GM12878 (cell line): ENCODE measurements at regions of chr1 and their contacts with region 1.

Region 1: GRCh38 chr1:35557292-35558063 is at the starts of genes KIAA0319L and NCDN:
- DNase-seq: peak; percentile 85
- ATAC-seq: peak; percentile 94
- H3K4me3 ChIP-seq: peak within 1 kb of the TSS; percentile 67
- H3K27ac ChIP-seq: peak within 1 kb of the TSS; percentile 97
- H3K4me1 ChIP-seq: peaks cover 10% of the 10 kb centered on the region
- H3K27me3 ChIP-seq: no peaks in the 10 kb centered on the region
- CTCF ChIP-seq: no peak
- EP300 ChIP-seq: no peak
- POLR2A ChIP-seq: peak; percentile 93
- RAD21 ChIP-seq: no peak
- polyA plus RNA-seq, gene KIAA0319L: 2.6 to 5.9 TPM
- polyA plus RNA-seq, gene NCDN: 1.8 to 2.0 TPM

Region 2: DNA sequence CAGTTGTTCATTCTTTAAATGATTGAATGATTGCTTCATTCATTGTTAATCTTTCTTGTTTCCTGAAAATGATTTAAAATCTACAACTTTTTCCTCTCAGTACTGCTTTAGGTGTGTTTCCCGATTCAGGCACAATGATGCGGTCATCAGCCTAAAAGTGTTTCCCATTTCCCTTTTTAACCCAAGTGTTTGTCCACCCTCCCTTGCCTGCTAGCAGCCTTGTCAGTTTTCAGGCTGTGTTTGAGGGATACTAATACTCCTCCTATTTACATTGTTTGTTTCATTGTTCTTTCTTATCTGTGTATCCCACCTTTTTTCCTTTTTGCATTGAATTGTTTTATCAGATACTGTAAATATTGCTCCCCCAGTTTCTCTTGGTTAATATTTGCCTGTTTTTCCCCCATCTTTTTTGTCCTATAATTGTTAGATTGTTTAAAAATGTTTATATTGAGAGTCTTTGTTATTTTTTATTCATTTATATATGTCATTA is 131.3 kb before region 1 on chr1:
- CTCF ChIA-PET with region 1: no interaction called
- POLR2A ChIA-PET with region 1: no interaction called
- RAD21 ChIA-PET with region 1: no interaction called
- SMC1A ChIA-PET with region 1: no interaction called
- in situ Hi-C with region 1: no loop called
- intact Hi-C with region 1: no loop called
- DNase-seq: no peak
- ATAC-seq: no peak
- H3K4me3 ChIP-seq: no peak overlapping the region
- H3K27ac ChIP-seq: no peak overlapping the region
- H3K4me1 ChIP-seq: no peaks in the 10 kb centered on the region
- H3K27me3 ChIP-seq: no peaks in the 10 kb centered on the region
- CTCF ChIP-seq: no peak
- EP300 ChIP-seq: no peak
- POLR2A ChIP-seq: no peak
- RAD21 ChIP-seq: no peak

Region 3: GRCh38 chr1:35539073-35539823 is 18.2 kb before region 1 on chr1:
- CTCF ChIA-PET with region 1: interaction called, 24 read pairs
- POLR2A ChIA-PET with region 1: interaction called, 19 read pairs
- RAD21 ChIA-PET with region 1: interaction called, 35 read pairs
- SMC1A ChIA-PET with region 1: interaction called, 26 read pairs
- in situ Hi-C with region 1: no loop called
- intact Hi-C with region 1: loop called (anchors 2 kb)
- DNase-seq: peak; percentile 75
- ATAC-seq: peak; percentile 73
- H3K4me3 ChIP-seq: peak overlapping the region; percentile 39
- H3K27ac ChIP-seq: peak overlapping the region; percentile 87
- H3K4me1 ChIP-seq: peaks cover 27% of the 10 kb centered on the region
- H3K27me3 ChIP-seq: no peaks in the 10 kb centered on the region
- CTCF ChIP-seq: no peak
- EP300 ChIP-seq: no peak
- POLR2A ChIP-seq: peak; percentile 41
- RAD21 ChIP-seq: no peak

Region 4: DNA sequence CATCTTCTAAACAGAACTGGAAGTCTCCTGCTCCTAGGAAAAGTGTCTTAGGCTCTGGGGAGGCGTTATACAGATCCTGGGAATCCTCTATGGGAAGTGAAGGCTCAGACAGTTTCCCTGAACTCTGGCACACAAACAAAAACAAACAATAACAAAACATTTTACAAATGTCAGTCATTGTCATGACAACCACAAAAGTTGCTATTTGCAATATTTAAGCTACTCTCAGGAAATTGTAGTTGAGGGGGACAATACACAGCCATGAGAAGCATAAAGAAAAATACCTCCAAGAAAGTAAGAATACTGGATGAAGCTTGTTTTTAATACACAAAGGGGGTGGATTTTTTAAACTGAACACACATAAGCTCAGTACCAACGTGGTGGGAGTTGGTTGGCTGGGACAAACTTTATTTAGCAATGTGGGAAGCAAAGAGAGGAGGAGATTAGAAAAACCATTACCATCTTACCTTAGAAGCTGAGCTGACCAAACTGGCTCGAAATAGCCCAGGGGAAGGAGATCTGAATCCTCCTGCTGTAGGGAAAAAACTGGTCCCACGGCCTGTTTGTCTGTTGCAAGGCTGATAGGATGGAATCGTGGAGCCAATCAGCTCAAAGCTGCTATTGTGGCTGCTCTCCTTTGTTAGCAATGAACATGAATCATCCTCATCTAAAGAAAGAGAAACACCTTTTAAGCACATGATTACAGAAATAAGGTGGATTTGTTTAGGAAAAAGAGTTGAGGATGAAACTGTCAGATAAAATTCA is 190.6 kb after region 1 on chr1:
- CTCF ChIA-PET with region 1: no interaction called
- POLR2A ChIA-PET with region 1: interaction called, 10 read pairs
- RAD21 ChIA-PET with region 1: no interaction called
- SMC1A ChIA-PET with region 1: no interaction called
- in situ Hi-C with region 1: no loop called
- intact Hi-C with region 1: no loop called
- DNase-seq: no peak
- ATAC-seq: no peak
- H3K4me3 ChIP-seq: no peak overlapping the region
- H3K27ac ChIP-seq: no peak overlapping the region
- H3K4me1 ChIP-seq: no peaks in the 10 kb centered on the region
- H3K27me3 ChIP-seq: no peaks in the 10 kb centered on the region
- CTCF ChIP-seq: no peak
- EP300 ChIP-seq: no peak
- POLR2A ChIP-seq: no peak
- RAD21 ChIP-seq: no peak

Region 5: DNA sequence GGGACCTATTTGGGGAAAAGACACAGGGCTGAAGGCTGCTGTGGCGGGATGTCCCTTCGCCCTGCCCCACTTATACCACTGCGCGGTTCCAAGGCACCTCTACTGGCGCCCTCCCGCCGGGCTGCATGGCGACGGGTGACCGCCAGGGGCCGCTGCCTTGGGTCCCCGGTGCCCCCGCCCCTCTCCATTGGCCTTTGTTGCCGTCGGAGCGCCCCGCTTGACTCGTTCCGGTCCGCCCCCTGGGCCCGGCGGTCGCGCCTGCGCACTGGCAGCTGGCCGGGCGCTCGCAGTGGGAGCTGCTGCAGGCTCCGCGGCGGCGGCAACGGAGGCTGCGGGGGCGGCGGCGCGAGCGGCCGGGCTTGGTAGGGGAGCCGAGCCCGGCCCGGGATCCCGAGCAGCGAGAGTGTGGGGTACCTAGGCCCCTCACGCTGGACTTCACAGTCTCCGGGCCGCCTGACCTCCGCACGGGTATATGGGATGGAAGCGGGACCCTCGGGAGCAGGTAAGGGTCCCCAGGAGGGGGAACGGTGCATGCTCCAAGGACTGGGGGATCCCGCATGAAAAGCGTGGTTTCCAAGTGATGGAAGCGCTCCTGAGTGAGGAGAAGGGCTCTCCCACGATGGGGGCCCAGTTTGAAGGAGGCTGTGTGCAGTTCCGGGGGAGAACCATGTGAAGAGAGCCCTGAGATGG is 325.6 kb after region 1 on chr1 and contains the start of gene AGO1:
- CTCF ChIA-PET with region 1: no interaction called
- POLR2A ChIA-PET with region 1: interaction called, 12 read pairs
- RAD21 ChIA-PET with region 1: no interaction called
- SMC1A ChIA-PET with region 1: no interaction called
- in situ Hi-C with region 1: no loop called
- intact Hi-C with region 1: no loop called
- DNase-seq: peak; percentile 63
- ATAC-seq: peak; percentile 93
- H3K4me3 ChIP-seq: peak within 1 kb of the TSS; percentile 97
- H3K27ac ChIP-seq: peak within 1 kb of the TSS; percentile 65
- H3K4me1 ChIP-seq: peaks cover 14% of the 10 kb centered on the region
- H3K27me3 ChIP-seq: no peaks in the 10 kb centered on the region
- CTCF ChIP-seq: peak; percentile 95 to 98 (median 97); a peak in 5 of 6 replicates
- EP300 ChIP-seq: no peak
- POLR2A ChIP-seq: peak; percentile 83
- RAD21 ChIP-seq: peak; percentile 51
- polyA plus RNA-seq, gene AGO1: 1.8 to 3.3 TPM